ENCODE measurements at regions of chr12 and their contacts with region 1.

Region 1: GRCh38 chr12:53379389-53380103 is 430 bp upstream of the SP1 start:
- DNase-seq: peak; percentile 95 to 100 (median 100)
- H3K4me3 ChIP-seq: peak overlapping the region; percentile 49 to 97 (median 76)
- H3K27ac ChIP-seq: peak overlapping the region; percentile 86 to 100 (median 98)
- H3K27me3 ChIP-seq: no peaks in the 10 kb centered on the region
- CTCF ChIP-seq: peak in 11 of 56 donors; percentile 5 to 34 (median 14)

Region 2: GRCh38 chr12:52992699-52993557 is 386.6 kb before region 1 on chr12:
- intact Hi-C with region 1: no loop called
- DNase-seq: peak in 2 of 10 donors; percentile 11 to 12
- H3K4me3 ChIP-seq: no peak overlapping the region
- H3K27ac ChIP-seq: no peak overlapping the region
- H3K27me3 ChIP-seq: no peaks in the 10 kb centered on the region
- CTCF ChIP-seq: no peak

Region 3: GRCh38 chr12:53441040-53441833 is 61.7 kb after region 1 on chr12 and contains the start of gene PRR13:
- intact Hi-C with region 1: loop called in 1 of 2 experiments (anchors 2 kb)
- DNase-seq: peak; percentile 93 to 99 (median 98)
- H3K4me3 ChIP-seq: peak within 1 kb of the TSS; percentile 55 to 97 (median 81)
- H3K27ac ChIP-seq: peak within 1 kb of the TSS; percentile 72 to 98 (median 93)
- H3K27me3 ChIP-seq: no peaks in the 10 kb centered on the region
- CTCF ChIP-seq: peak in 23 of 56 donors; percentile 2 to 46 (median 20)
- total RNA-seq, gene PRR13: 52.9 to 141 (median 93.1) TPM

Measured in dorsolateral prefrontal cortex (tissue), 120 donors.